AG04449 (cell line): ENCODE measurements at regions of chr1 and their contacts with region 1.

Region 1: GRCh38 chr1:155961937-155962336 is 16.4 kb downstream of the ARHGEF2 start:
- DNase-seq: peak; percentile 74
- H3K4me3 ChIP-seq: no peak overlapping the region
- CTCF ChIP-seq: peak; percentile 71

Region 2: DNA sequence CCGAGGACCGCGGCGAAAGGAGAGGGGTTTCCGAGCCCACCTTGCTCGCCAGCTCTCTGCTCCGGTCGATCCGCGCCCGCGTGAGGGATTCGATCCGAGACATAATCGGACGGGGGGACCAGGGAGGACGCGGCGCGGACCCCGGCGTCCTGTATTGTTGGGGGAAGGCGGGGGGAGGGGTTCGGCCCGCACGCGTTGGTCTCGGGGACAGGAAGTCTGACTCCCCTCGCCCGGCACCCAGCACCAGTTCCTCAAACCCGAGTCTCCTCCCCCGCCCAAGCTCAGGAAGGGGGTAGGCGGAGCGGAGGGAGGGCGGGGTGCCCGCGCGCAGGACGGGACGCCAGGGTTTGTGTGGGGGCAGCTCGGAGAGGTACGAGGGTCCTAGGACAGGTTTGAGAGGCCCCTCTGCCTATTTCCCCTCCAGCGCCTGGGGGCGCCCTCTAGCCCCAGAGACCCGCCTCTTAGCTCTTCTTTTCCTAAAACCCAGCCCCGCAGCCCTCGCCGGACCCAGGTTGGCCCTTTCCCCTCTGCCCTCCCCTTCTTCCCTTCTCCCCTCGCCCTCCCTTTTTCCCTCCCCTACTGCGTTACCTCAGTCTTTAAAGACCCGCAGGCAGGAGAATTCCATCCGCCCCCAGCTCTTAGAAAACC is 16.5 kb after region 1 on chr1 and contains the start of gene ARHGEF2:
- CTCF ChIA-PET with region 1: interaction called, 24 read pairs
- POLR2A ChIA-PET with region 1: interaction called, 58 read pairs
- DNase-seq: no peak
- H3K4me3 ChIP-seq: peak within 1 kb of the TSS; percentile 88
- CTCF ChIP-seq: peak; percentile 30